ENCODE measurements at regions of chr4 and their contacts with region 1.

Region 1: DNA sequence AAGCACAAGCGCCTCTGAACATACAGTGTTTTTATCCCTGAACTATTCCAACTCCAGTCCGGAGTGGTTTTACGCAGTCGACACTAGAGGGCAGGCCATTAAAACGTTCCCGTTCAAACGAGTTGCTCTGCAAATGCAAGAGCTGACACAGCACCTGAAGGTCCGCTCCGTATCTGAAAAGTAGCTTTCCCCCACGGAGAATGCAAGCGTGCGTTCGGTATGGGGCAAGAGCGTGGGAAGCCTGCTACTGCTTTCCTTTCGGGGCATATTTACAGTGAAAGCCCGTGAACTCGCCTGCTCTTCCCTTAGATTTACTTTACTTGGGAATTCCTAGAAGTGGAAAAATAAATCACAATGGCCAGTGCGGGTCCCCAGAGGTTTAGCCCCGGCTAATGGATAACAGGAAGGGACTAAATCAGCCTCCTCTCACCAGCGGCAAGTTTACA is 190.8 kb downstream of the TSPAN5 start:
- DNase-seq: peak; percentile 67 to 74
- ATAC-seq: peak; percentile 99

Region 2: GRCh38 chr4:98248934-98249333 is 218.7 kb before region 1 on chr4:
- intact Hi-C with region 1: no loop called
- DNase-seq: no peak
- ATAC-seq: no peak

Region 3: DNA sequence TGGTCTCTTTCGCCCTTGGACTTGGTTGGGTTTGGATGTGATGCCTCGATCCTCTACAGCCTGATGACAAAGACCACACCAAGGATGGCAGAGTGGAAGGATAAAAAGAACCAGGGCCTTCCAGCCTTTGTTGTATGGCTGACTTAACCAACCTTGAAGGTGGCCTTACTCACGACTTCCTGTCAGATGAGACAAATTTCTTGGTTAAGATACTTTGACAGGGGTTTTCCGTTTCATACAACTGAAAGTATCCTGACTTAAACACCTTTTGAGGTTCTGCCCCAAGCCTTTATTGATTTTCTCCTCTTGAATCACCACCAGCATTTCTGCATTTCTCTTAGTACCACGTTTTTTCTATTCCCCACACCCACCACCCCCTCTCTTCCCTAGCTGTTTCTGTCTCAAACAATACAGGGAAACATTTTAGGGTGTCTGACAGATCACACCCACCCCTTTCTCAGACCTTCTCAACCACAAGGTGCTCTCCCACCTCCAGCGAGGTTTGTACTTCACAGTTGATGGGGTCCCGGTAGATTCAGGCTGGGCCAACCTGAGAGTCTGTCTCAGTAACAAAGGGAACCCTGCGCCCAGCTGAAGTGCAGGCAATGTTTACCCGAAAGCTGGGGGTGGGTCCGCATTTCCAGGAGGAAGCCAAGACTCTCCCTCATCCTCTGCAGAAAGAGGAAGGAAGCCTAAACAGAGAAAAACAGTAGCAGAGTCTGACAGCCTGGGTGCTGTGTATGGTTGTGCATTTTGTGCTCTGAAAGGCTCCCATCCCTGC is 195.8 kb after region 1 on chr4:
- intact Hi-C with region 1: loop called in 1 of 2 experiments (anchors 10 kb)
- DNase-seq: peak in 1 of 2 donors; percentile 11
- ATAC-seq: no peak